Gastrocnemius medialis (tissue), 4 donors: ENCODE measurements at regions of chr2 and their contacts with region 1.

Region 1: DNA sequence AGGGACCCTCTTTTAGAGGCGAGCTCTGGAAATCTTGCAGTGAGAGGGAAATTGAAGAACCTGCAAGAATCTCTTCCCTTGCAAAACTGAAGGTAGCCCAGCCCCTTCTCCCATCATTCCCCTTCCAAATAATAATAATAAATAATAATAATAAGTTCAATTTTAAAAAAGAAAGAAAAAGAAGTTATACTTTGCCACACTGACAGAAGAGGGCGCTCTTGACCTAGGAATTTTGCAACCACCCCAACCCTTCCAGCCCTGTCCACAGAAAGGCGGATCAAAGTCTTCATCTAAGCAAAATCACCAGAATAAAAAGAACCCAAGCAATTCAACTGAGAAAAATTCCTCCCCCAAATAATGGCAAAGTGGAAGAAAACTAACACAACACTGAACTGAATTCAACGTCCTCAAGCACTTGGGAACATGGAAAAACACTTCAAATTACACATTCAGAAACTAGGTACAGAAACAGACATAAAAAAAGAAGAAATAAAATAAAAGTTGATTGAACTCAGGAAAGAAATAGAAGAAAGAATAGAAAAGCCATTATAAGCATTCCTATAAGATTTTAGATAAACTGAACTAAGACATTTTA is 98.9 kb upstream of the GLS start:
- DNase-seq: no peak
- ATAC-seq: no peak
- H3K4me3 ChIP-seq: no peak overlapping the region
- H3K27ac ChIP-seq: no peak overlapping the region
- H3K4me1 ChIP-seq: no peaks in the 10 kb centered on the region
- H3K27me3 ChIP-seq: no peaks in the 10 kb centered on the region
- CTCF ChIP-seq: peak; percentile 27 to 58 (median 40)
- POLR2A ChIP-seq: no peak

Region 2: GRCh38 chr2:190537765-190538164 is 243.9 kb before region 1 on chr2:
- in situ Hi-C with region 1: no loop called
- intact Hi-C with region 1: no loop called
- DNase-seq: no peak
- ATAC-seq: no peak
- H3K4me3 ChIP-seq: no peak overlapping the region
- H3K27ac ChIP-seq: no peak overlapping the region
- H3K4me1 ChIP-seq: peaks cover 11 to 13% of the 10 kb centered on the region in 2 donors
- H3K27me3 ChIP-seq: no peaks in the 10 kb centered on the region
- CTCF ChIP-seq: no peak
- POLR2A ChIP-seq: no peak

Region 3: GRCh38 chr2:191030521-191031154 is 248.9 kb after region 1 on chr2:
- in situ Hi-C with region 1: no loop called
- intact Hi-C with region 1: loop called (anchors 5 kb)
- DNase-seq: no peak
- ATAC-seq: peak in 1 of 2 donors; percentile 85
- H3K4me3 ChIP-seq: no peak overlapping the region
- H3K27ac ChIP-seq: no peak overlapping the region
- H3K4me1 ChIP-seq: no peaks in the 10 kb centered on the region
- H3K27me3 ChIP-seq: no peaks in the 10 kb centered on the region
- CTCF ChIP-seq: peak; percentile 35 to 62 (median 50)
- POLR2A ChIP-seq: no peak